ENCODE measurements at regions of chr14 and their contacts with region 1.

Region 1: GRCh38 chr14:24108336-24108874 is 6.2 kb upstream of the DCAF11 start:
- DNase-seq: no peak
- H3K4me3 Mint-ChIP-seq: no peak overlapping the region
- H3K27ac Mint-ChIP-seq: no peak overlapping the region
- H3K4me1 Mint-ChIP-seq: peaks cover 11% of the 10 kb centered on the region
- H3K27me3 Mint-ChIP-seq: no peaks in the 10 kb centered on the region
- CTCF ChIP-seq: no peak

Region 2: DNA sequence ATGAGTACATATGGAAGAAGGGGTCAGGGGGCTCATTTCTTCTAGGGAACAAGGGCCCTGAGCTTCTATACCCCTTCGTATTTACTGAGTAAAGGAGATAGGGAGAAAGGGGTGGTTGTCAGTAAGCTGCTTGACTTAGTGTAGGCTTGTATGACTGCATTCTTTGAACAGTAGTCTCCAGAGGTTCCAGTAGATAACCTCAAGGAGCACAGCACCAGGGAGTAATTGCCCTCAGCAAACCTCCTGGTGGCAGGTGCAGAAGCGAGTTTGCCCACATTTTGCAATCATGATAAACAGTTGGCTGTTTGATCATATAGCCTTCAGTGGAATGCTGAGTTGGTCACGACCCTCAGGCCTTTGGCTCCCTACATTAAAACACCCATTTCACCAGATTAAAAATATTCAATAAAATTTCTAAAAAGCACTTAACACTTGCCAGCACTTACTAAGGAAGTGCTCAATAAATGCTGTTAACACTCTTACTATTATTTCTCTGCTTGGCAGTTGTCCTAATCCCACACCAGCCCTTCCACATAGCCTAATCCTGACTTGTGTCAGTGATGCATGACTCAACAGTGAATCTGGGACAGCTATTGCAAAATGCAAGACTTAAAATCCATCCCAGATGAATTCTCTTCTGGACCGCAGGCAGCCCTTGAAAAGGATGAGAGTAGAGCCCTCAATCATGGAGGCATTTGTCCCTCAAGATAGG is 123.4 kb before region 1 on chr14:
- CTCF ChIA-PET with region 1: interaction called, 24 read pairs
- POLR2A ChIA-PET with region 1: interaction called, 8 read pairs
- intact Hi-C with region 1: no loop called
- DNase-seq: peak; percentile 87
- H3K4me3 Mint-ChIP-seq: no peak overlapping the region
- H3K27ac Mint-ChIP-seq: no peak overlapping the region
- H3K4me1 Mint-ChIP-seq: peaks cover 18% of the 10 kb centered on the region
- H3K27me3 Mint-ChIP-seq: no peaks in the 10 kb centered on the region
- CTCF ChIP-seq: no peak

Region 3: DNA sequence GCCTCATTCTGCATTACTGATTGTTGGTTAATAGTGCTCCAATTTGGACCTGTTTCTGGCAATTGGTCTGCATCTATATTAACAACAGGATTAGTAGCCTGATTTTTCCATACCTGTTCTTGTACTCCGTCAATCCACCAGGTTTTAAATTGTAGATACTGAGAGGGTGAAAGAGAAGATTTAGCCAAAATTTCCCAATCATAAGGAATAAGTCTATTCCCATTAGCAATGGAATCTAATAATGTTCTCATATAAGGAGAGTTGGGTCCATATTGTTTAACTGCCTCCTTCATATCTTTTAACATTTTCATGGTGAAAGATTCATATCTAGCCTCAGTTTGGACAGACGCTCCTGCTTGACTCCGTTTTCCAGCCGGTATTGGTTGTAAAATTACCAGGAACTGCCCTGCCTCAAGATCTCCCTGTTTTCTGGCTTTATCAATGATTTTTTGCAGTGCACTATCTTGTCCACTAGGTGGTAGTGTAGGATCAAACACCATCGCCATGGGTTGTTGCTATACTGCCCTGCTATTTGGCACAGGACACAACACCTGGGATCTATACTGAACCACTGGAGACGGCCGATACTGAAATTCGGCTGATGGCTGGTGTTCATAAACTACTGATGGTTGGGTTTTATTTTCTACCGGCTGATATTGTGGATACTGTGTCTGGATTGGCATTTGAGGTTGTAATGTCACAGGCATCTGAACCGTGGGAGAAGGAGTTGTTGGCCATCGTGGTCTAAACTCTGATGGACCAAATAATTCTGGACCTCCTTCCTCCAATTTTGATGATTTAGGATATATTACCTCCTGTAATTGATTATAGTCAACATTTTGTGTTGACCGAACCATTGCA is 94.5 kb before region 1 on chr14:
- CTCF ChIA-PET with region 1: interaction called, 5 read pairs
- POLR2A ChIA-PET with region 1: interaction called, 5 read pairs
- intact Hi-C with region 1: loop called (anchors 1 kb)
- DNase-seq: peak; percentile 83
- H3K4me3 Mint-ChIP-seq: no peak overlapping the region
- H3K27ac Mint-ChIP-seq: no peak overlapping the region
- H3K4me1 Mint-ChIP-seq: no peaks in the 10 kb centered on the region
- H3K27me3 Mint-ChIP-seq: peaks cover 20% of the 10 kb centered on the region
- CTCF ChIP-seq: peak; percentile 80

Region 4: GRCh38 chr14:24058260-24058950 is 50.0 kb before region 1 on chr14:
- CTCF ChIA-PET with region 1: interaction called, 79 read pairs
- POLR2A ChIA-PET with region 1: interaction called, 9 read pairs
- intact Hi-C with region 1: no loop called
- DNase-seq: peak; percentile 66
- H3K4me3 Mint-ChIP-seq: no peak overlapping the region
- H3K27ac Mint-ChIP-seq: no peak overlapping the region
- H3K4me1 Mint-ChIP-seq: peaks cover 4% of the 10 kb centered on the region
- H3K27me3 Mint-ChIP-seq: peaks cover 48% of the 10 kb centered on the region
- CTCF ChIP-seq: peak; percentile 49

Region 5: GRCh38 chr14:24135834-24136542 is 27.6 kb after region 1 on chr14 and contains the start of gene PSME1:
- CTCF ChIA-PET with region 1: interaction called, 10 read pairs
- POLR2A ChIA-PET with region 1: interaction called, 252 read pairs
- intact Hi-C with region 1: no loop called
- DNase-seq: peak; percentile 89
- H3K4me3 Mint-ChIP-seq: peak within 1 kb of the TSS; percentile 75
- H3K27ac Mint-ChIP-seq: peak within 1 kb of the TSS; percentile 86
- H3K4me1 Mint-ChIP-seq: peaks cover 42% of the 10 kb centered on the region
- H3K27me3 Mint-ChIP-seq: no peaks in the 10 kb centered on the region
- CTCF ChIP-seq: no peak
- total RNA-seq, gene PSME1: 126 and 135 TPM in 2 replicates

Region 6: DNA sequence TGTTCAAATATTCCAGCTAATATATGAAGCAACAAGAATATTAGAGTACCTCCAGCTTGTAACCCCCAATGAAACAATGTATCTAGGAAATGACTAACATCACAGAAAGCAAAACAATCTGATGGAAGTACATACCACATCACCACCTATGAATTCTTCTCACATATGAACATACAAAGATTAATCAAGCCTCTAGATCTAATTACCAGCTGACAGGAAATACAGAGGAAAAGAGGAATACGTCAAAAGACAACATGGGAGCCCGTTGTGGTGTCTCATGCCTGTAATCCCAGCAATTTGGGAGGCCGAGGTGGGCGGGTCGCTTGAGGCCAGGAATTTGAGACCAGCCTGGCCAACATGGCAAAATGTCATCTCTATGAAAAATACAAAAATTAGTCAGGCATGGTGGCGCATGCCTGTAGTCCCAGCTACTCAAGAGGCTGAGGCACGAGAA is 116.2 kb after region 1 on chr14:
- CTCF ChIA-PET with region 1: no interaction called
- POLR2A ChIA-PET with region 1: no interaction called
- intact Hi-C with region 1: no loop called
- DNase-seq: peak; percentile 54
- H3K4me3 Mint-ChIP-seq: peak overlapping the region; percentile 43
- H3K27ac Mint-ChIP-seq: peak overlapping the region; percentile 73
- H3K4me1 Mint-ChIP-seq: peaks cover 20% of the 10 kb centered on the region
- H3K27me3 Mint-ChIP-seq: no peaks in the 10 kb centered on the region
- CTCF ChIP-seq: no peak

Region 7: DNA sequence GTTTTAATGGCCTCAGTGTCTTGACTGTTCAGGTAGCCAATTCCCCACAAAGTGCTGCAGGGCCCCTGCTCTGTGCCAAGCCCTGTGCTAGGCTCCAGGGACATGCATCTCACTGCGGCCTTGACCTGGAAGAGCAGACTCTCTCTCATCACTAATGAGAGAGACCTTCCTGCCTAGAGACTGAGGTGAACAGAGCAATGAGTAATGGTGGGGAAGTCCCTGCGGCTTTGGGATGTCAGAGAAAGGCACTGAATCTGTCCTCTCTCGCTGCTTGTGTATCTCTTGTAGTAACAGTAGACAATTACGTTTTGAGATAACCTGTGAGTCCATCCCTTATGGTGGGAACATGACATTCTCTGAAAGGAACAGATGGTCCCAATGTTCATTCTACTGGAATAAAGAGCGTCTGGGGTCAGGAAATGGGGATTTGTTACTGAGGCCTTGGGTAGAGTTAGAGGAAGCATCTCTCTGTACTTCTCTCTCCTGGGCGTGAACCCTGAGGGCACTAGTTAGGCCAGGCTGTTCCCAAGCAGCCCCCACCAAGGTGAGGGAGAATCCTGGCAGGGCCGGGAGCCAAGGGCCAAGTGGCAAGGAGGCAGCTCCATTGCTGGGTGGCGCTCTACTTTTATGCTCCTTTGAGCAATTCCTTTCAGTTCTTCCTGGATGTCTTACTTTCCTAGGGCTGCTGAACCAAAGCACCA is 273.1 kb after region 1 on chr14:
- CTCF ChIA-PET with region 1: no interaction called
- POLR2A ChIA-PET with region 1: no interaction called
- intact Hi-C with region 1: no loop called
- DNase-seq: no peak
- H3K4me3 Mint-ChIP-seq: no peak overlapping the region
- H3K27ac Mint-ChIP-seq: no peak overlapping the region
- H3K4me1 Mint-ChIP-seq: no peaks in the 10 kb centered on the region
- H3K27me3 Mint-ChIP-seq: peaks cover 13% of the 10 kb centered on the region
- CTCF ChIP-seq: no peak

Measured in MCF 10A (cell line).